ENCODE measurements at regions of chr18 and their contacts with region 1.

Region 1: DNA sequence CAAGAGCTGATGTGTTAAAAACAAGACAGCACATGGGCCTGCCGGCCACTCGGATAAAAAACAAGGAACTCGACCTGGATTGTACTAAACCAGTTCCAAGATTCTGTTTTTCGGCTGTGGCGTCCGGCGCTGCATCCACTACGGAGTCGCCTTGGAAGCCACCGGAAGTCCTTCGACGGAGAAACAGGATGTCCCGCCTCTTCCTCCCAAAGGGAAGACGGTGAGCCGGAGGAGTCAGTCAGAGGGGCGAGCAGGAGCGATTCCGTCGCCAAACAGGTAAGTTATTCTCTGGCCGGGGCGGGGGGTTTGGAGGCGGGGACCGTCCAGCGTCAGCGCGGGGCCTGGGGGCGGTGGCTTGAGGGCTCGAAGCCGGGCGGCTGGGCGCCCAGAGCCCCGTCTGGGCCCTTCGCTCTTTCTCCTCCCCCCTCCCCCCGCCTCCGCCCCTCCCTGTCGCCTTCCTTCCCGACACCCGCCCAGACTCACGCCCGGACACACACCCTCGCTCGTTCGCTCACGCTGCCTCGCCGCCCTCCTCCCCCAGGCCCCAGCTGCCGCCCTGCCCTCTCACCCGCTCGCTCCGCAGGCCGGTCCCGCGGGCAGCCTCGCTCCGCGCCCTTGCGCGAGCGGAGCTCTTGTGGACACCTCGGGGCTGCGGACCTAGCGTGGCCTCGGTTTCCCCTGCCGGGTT is at the start of gene ZNF407:
- H3K4me3 Mint-ChIP-seq: peak within 1 kb of the TSS; percentile 97
- H3K27ac Mint-ChIP-seq: peak within 1 kb of the TSS; percentile 99
- H3K4me1 Mint-ChIP-seq: peaks cover 45% of the 10 kb centered on the region
- H3K27me3 Mint-ChIP-seq: no peaks in the 10 kb centered on the region

Region 2: DNA sequence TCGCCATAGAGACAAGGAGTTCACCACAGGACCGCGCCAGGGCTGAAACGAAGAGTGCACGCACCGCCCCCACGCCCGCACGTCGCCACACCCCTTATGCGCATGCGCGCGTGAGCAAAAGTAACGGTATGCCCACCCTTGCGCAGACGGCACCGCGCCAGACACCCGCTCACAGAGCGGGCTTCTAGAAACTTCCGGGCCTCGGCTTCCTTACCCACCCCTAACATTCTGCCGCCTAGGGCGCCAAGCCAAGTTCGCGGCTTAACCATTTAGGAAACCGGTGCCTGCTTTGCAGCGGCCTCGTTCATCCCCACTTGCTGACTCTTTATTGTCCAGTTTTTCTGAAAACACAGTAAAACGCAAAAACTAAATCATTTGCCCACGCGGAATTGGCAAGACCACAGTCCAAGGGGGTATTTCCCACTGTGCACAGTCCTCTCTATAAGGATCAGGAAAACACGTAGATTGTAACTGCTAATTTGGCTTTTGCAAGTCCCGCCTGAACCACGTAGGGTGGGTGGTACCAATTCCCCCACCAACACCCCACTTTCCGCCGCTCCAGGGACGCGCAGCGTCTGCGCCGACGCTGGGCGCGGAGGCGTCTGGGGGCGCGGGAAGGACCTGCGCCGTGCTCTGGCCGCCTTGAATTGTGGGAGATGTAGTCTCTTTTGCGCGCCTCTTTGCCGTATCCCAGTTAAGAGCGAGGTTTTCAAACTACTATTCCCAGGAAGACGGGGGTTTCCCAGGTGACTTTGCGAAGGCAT is 449.8 kb before region 1 on chr18 and contains the starts of genes FBXO15 and TIMM21:
- intact Hi-C with region 1: loop called (anchors 1 kb)
- H3K4me3 Mint-ChIP-seq: peak within 1 kb of the TSS; percentile 92
- H3K27ac Mint-ChIP-seq: peak within 1 kb of the TSS; percentile 97
- H3K4me1 Mint-ChIP-seq: peaks cover 41% of the 10 kb centered on the region
- H3K27me3 Mint-ChIP-seq: peaks cover 4% of the 10 kb centered on the region

Region 3: GRCh38 chr18:74534981-74535649 is 62.7 kb before region 1 on chr18:
- intact Hi-C with region 1: no loop called
- H3K4me3 Mint-ChIP-seq: no peak overlapping the region
- H3K27ac Mint-ChIP-seq: no peak overlapping the region
- H3K4me1 Mint-ChIP-seq: no peaks in the 10 kb centered on the region
- H3K27me3 Mint-ChIP-seq: peaks cover 4% of the 10 kb centered on the region

Region 4: GRCh38 chr18:74567822-74568221 is 30.0 kb before region 1 on chr18:
- intact Hi-C with region 1: loop called (anchors 2 kb)
- H3K4me3 Mint-ChIP-seq: no peak overlapping the region
- H3K27ac Mint-ChIP-seq: peak overlapping the region; percentile 27
- H3K4me1 Mint-ChIP-seq: peaks cover 17% of the 10 kb centered on the region
- H3K27me3 Mint-ChIP-seq: peaks cover 24% of the 10 kb centered on the region

Region 5: DNA sequence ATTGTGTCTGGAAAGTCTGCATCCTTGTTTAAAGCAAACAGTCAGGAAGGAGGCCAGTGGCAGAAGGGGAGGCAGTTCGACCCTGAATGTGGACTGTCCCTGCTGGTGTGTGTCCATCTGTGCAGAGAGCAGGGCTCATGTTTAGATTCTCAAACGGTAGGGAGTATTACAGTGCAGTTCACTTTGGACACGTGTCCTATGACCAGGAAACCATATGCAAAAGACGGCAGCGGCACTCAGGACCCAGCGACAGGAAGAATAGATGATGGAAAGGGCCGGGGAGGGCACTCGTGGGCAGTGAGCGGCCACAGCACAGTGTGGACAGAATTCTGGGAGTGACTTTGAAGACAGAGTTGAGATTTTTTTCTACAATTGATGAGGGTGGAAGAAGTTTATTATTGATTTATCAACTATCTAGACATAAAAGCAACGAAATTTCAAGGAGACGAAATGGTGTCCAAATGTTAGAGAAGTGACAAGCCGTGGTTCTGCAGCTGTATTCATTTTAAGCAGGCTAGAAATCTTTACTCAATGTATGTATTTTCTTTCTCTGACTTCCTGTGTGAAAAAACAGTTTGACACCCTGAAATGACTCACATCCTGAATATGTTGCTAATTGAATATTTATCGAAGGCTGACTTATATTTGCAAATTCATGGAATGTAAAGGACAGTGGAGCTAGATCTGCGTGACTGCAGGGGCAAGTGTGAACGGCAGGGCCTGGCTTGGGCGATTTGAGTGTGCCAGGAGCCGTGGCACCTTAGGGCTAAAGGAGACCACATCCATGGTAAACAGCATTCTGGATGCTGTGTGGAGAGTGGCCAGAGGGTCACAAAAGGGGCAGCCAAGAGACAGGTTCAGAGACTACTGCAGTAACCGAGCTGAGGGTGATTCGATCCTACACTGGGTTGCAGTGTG is 397.0 kb after region 1 on chr18:
- intact Hi-C with region 1: loop called (anchors 10 kb)
- H3K4me3 Mint-ChIP-seq: peak overlapping the region; percentile 57
- H3K27ac Mint-ChIP-seq: peak overlapping the region; percentile 87
- H3K4me1 Mint-ChIP-seq: peaks cover 54% of the 10 kb centered on the region
- H3K27me3 Mint-ChIP-seq: no peaks in the 10 kb centered on the region

Region 6: DNA sequence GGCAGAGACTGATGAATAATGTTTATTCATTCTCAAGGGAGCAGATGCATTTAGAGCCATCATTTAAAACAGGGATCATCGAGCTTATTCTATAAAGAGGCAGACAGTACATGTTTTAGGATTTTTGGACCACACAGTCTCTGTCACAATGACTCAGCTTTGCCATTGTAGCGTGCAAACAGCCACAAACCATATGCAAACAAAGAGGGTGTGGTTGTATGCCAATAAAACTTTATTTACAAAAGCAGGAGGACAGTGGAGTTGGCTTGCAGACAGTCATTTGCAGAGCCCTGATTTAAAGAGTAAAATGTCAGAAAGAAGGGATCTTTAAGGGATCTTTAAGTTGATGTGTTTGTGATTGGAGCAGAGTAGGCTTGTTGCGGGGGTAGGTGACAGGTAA is 778.2 kb after region 1 on chr18:
- intact Hi-C with region 1: no loop called
- H3K4me3 Mint-ChIP-seq: no peak overlapping the region
- H3K27ac Mint-ChIP-seq: no peak overlapping the region
- H3K4me1 Mint-ChIP-seq: no peaks in the 10 kb centered on the region
- H3K27me3 Mint-ChIP-seq: peaks cover 3% of the 10 kb centered on the region